Spleen (tissue), 13 donors: ENCODE measurements at regions of chr7 and their contacts with region 1.

Region 1: DNA sequence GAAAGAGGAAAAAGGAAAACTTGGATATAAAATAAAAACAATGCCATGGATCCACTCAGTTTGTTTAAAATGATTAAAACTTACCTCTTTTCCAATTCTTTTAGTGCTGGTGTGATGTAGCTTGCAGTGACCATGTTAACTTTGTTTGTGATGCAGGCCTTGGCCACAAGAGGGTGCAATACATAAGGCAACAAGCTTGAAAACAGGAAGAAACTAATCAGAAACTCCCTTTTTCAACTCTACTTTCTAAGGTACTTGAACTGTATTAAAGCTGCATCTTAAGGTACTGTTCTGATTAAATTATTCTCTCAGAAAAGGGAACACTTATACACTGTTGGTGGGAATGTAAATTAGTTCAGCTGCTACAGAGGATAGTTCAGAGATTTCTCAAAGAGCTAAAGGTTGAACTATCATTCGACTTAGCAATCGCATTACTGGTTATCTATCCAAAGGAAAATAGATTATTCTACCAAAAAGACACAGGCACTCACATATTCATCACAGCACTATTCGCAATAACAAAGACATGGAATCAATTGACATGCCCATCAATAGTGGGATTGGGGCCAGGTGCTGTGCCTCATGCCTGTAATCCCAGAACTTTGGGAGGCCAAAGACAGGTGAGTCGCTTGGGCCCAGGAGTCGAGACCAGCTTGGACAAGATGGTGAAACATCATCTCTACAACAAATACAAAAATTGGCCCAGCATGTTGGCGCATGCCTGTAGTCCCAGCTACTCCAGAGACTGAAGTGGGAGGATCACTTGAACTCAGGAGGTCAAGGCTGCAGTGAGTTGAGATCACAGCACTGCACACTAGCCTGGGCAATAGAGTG is 50.9 kb downstream of the AASS start:
- DNase-seq: no peak
- H3K4me3 ChIP-seq: no peak overlapping the region
- H3K27ac ChIP-seq: no peak overlapping the region
- H3K4me1 ChIP-seq: peaks cover 0 to 5% (median 0%) of the 10 kb centered on the region in 6 donors
- H3K27me3 ChIP-seq: no peaks in the 10 kb centered on the region
- CTCF ChIP-seq: peak in 10 of 11 experiments; percentile 13 to 79 (median 63)
- POLR2A ChIP-seq: no peak

Region 2: DNA sequence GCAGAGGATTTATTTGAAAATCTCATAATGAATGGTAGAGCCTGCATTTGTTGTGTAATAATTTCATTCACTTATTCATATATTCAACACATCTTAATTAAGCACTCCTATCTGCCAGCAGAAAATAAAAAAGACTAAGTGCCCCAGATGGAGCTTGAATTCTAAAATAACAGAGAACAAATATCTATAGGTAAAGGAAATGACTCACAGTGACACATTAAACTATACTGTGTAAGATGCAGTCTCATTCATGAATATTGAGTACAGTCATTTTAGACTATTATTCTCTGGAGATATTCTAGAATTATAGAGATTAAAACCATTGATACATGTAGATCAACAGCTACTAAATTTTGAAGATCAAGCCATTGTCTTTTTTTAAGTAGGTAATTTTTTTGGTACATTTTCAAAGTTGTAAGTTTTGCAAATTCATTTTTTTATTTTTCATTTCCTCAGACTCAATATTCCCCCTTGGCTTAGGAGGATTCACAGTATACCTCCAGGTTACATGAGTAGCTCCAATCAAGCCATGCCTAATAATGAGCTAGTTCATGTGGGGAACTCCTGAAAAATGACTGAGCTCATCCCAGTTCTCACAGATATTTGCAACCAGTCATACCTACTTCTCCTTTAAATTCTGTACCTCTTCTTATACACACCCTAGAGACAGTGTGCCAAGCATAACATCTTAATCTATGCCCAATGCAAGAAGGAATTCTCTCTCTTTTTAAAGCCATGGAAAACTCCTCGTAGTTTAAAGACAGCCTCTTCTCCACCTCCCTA is 147.9 kb before region 1 on chr7:
- intact Hi-C with region 1: no loop called
- DNase-seq: no peak
- H3K4me3 ChIP-seq: no peak overlapping the region
- H3K27ac ChIP-seq: no peak overlapping the region
- H3K4me1 ChIP-seq: no peaks in the 10 kb centered on the region
- H3K27me3 ChIP-seq: no peaks in the 10 kb centered on the region
- CTCF ChIP-seq: no peak
- POLR2A ChIP-seq: no peak

Region 3: DNA sequence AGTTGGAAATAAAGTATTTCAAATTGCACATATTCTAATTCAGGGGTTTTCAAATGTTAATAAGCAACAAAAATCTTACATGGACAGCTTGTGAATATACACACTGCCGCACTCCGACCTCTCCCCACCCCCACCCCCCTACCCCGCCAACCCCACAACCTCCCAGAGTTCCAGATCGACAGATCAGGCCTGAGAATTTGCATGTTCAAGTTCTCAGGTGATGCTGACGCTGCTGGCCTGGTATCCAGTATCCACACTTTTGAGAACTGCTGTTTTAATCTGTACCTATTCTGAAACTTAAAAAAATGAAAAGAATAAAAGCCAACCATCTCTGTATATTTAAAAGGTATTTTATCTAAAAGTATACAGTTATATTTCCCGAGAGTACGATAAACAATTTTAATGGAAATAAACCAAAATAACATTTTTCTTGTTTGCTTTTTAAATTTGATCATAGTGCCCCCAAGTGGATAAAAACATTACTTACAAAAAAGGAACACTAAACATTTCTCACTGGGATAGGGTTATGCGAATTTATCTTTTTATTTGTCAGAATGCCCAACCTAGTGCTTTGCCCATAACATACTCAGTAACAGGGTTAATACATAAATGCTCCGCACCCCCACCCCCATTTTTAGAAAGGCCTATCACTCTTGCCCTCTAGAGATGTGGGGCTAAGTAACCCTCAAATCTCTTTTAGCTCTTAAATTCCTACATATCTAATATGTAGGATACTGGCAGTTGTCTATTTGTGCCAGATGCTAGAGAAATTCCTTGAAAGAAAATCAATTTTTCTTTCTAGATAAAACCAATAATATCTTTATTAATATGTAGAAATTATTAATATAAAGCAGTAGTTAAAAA is 439.5 kb after region 1 on chr7:
- intact Hi-C with region 1: loop called (anchors 5 kb)
- DNase-seq: no peak
- H3K4me3 ChIP-seq: no peak overlapping the region
- H3K27ac ChIP-seq: no peak overlapping the region
- H3K4me1 ChIP-seq: no peaks in the 10 kb centered on the region
- H3K27me3 ChIP-seq: no peaks in the 10 kb centered on the region
- CTCF ChIP-seq: peak in 4 of 11 experiments; percentile 12 to 37 (median 24)
- POLR2A ChIP-seq: no peak